CD4-positive, alpha-beta T cell (primary cell): ENCODE measurements at regions of chr2 and their contacts with region 1.

Region 1: GRCh38 chr2:190880378-190881073 is at the start of gene GLS:
- DNase-seq: peak; percentile 94 to 99 (median 95)
- ATAC-seq: peak; percentile 74
- H3K4me3 ChIP-seq: peak within 1 kb of the TSS; percentile 73
- H3K4me3 Mint-ChIP-seq: peak within 1 kb of the TSS; percentile 99
- H3K27ac ChIP-seq: peak within 1 kb of the TSS; percentile 86 to 96
- H3K27ac Mint-ChIP-seq: peak within 1 kb of the TSS; percentile 97
- H3K4me1 ChIP-seq: peaks cover 29% of the 10 kb centered on the region
- H3K4me1 Mint-ChIP-seq: peaks cover 63% of the 10 kb centered on the region
- H3K27me3 ChIP-seq: no peaks in the 10 kb centered on the region
- H3K27me3 Mint-ChIP-seq: no peaks in the 10 kb centered on the region
- CTCF ChIP-seq: no peak
- total RNA-seq, gene GLS: 215 to 224 TPM

Region 2: DNA sequence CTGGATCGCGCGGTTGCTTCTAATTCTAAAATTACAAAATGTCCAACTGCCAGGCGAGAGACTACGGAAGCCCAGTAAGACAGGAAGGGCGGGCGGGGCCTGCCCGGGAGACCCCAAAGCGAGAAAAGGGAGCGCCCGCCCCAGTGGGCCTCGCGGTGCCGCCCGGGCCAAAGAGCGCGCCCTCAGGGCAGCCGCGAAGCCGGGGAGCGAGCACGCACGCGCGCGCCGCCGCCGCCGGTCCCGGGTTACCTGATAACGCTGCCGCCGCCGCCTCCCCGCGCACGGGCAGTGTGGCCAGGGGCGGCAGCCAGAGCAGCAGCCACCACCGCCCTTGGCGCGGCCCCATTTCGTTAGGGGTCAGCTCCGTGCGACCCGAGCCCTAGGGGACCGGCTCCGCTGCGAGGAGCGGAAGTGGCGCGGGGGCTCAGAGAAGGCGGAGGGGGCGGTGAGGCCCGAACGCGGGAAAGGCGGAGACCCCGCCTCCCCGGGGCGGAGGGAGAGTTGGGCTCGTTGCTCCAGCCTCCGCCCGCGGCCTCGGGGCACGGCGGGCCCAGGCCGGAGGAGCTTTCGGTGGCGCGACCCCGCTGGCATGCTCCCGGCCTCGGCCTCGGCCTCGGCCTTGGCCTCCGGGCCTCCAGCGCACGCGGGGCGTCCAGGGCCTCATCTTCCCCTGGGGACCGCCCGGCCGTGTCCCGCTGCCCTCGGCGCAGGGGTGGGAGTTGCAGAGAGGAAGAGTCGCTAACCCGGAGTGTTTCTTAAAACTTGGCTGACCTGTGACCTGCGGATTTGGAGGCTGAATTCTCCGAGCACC is 346.0 kb before region 1 on chr2 and contains the start of gene NEMP2:
- CTCF ChIA-PET with region 1: no interaction called
- POLR2A ChIA-PET with region 1: interaction called, 20 read pairs
- intact Hi-C with region 1: loop called in 1 of 2 experiments (anchors 5 kb)
- DNase-seq: peak; percentile 53 to 91 (median 76)
- ATAC-seq: peak; percentile 59
- H3K4me3 ChIP-seq: peak within 1 kb of the TSS; percentile 77
- H3K4me3 Mint-ChIP-seq: peak within 1 kb of the TSS; percentile 94
- H3K27ac ChIP-seq: peak within 1 kb of the TSS; percentile 87 to 95
- H3K27ac Mint-ChIP-seq: peak within 1 kb of the TSS; percentile 99
- H3K4me1 ChIP-seq: peaks cover 40% of the 10 kb centered on the region
- H3K4me1 Mint-ChIP-seq: peaks cover 73% of the 10 kb centered on the region
- H3K27me3 ChIP-seq: no peaks in the 10 kb centered on the region
- H3K27me3 Mint-ChIP-seq: no peaks in the 10 kb centered on the region
- CTCF ChIP-seq: no peak
- total RNA-seq, gene NEMP2: 11.6 to 12.2 TPM

Region 3: DNA sequence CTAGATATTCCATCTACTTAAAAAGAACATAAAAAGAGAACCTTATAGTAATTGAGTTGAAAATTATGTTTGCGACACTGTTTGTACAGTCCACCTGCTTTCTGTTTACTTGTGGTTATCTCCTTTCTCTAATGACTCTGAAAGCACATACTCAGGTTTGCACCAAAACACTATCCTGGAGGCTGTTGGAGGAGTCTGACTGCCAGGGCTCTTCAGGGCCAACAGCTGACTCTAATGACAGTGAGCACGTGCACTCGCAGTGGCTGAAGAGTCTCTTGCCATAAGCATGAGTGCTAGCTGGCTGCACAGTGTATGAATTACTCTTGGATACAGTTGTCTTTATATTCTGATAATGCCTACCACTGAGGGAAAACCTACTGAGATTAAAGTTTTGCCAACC is 16.6 kb before region 1 on chr2:
- CTCF ChIA-PET with region 1: interaction called, 3 read pairs
- POLR2A ChIA-PET with region 1: interaction called, 19 read pairs
- intact Hi-C with region 1: no loop called
- DNase-seq: no peak
- ATAC-seq: no peak
- H3K4me3 ChIP-seq: no peak overlapping the region
- H3K4me3 Mint-ChIP-seq: no peak overlapping the region
- H3K27ac ChIP-seq: no peak overlapping the region
- H3K27ac Mint-ChIP-seq: no peak overlapping the region
- H3K4me1 ChIP-seq: peaks cover 7% of the 10 kb centered on the region
- H3K4me1 Mint-ChIP-seq: peaks cover 29% of the 10 kb centered on the region
- H3K27me3 ChIP-seq: no peaks in the 10 kb centered on the region
- H3K27me3 Mint-ChIP-seq: no peaks in the 10 kb centered on the region
- CTCF ChIP-seq: no peak

Region 4: GRCh38 chr2:190916829-190917228 is 36.3 kb after region 1 on chr2:
- CTCF ChIA-PET with region 1: no interaction called
- POLR2A ChIA-PET with region 1: interaction called, 3 read pairs
- intact Hi-C with region 1: loop called in 1 of 2 experiments (anchors 5 kb)
- DNase-seq: peak in 3 of 14 experiments; percentile 3 to 25 (median 14)
- ATAC-seq: peak; percentile 68
- H3K4me3 ChIP-seq: no peak overlapping the region
- H3K4me3 Mint-ChIP-seq: no peak overlapping the region
- H3K27ac ChIP-seq: no peak overlapping the region
- H3K27ac Mint-ChIP-seq: peak overlapping the region; percentile 3
- H3K4me1 ChIP-seq: no peaks in the 10 kb centered on the region
- H3K4me1 Mint-ChIP-seq: peaks cover 57% of the 10 kb centered on the region
- H3K27me3 ChIP-seq: no peaks in the 10 kb centered on the region
- H3K27me3 Mint-ChIP-seq: no peaks in the 10 kb centered on the region
- CTCF ChIP-seq: no peak

Region 5: DNA sequence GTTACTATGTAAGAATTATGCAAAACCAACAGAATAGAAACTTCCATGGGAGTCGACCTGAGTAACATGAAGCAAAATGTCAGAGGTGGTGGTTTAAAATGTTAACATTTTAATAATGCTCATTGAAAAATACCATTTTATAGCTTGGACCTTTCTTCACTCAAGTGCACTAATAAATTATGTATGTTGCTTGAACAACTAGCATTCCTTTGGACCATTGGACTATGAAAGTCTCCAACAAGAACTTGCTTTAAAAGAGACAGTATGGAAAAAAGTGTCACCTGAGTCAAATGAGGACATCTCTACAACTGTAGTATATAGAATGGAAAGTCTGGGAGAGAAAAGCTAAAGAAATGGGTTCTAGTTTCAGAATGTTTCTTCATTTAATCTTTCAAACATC is 52.0 kb after region 1 on chr2:
- CTCF ChIA-PET with region 1: no interaction called
- POLR2A ChIA-PET with region 1: no interaction called
- intact Hi-C with region 1: no loop called
- DNase-seq: no peak
- ATAC-seq: no peak
- H3K4me3 ChIP-seq: no peak overlapping the region
- H3K4me3 Mint-ChIP-seq: no peak overlapping the region
- H3K27ac ChIP-seq: no peak overlapping the region
- H3K27ac Mint-ChIP-seq: peak overlapping the region; percentile 37
- H3K4me1 ChIP-seq: no peaks in the 10 kb centered on the region
- H3K4me1 Mint-ChIP-seq: peaks cover 37% of the 10 kb centered on the region
- H3K27me3 ChIP-seq: no peaks in the 10 kb centered on the region
- H3K27me3 Mint-ChIP-seq: no peaks in the 10 kb centered on the region
- CTCF ChIP-seq: no peak

Region 6: GRCh38 chr2:191013932-191014652 is 133.6 kb after region 1 on chr2 and contains the start of gene STAT1:
- CTCF ChIA-PET with region 1: no interaction called
- POLR2A ChIA-PET with region 1: interaction called, 53 read pairs
- intact Hi-C with region 1: loop called (anchors 1 to 5 kb)
- DNase-seq: peak; percentile 89 to 99 (median 96)
- ATAC-seq: peak; percentile 84
- H3K4me3 ChIP-seq: peak within 1 kb of the TSS; percentile 75
- H3K4me3 Mint-ChIP-seq: no peak within 1 kb of the TSS
- H3K27ac ChIP-seq: peak within 1 kb of the TSS; percentile 89 to 91
- H3K27ac Mint-ChIP-seq: no peak within 1 kb of the TSS
- H3K4me1 ChIP-seq: peaks cover 54% of the 10 kb centered on the region
- H3K4me1 Mint-ChIP-seq: peaks cover 43% of the 10 kb centered on the region
- H3K27me3 ChIP-seq: no peaks in the 10 kb centered on the region
- H3K27me3 Mint-ChIP-seq: no peaks in the 10 kb centered on the region
- CTCF ChIP-seq: no peak
- total RNA-seq, gene STAT1: 56.6 to 57.8 TPM

Region 7: GRCh38 chr2:191677646-191678436 is 797.3 kb after region 1 on chr2 and contains the start of gene NABP1:
- CTCF ChIA-PET with region 1: no interaction called
- POLR2A ChIA-PET with region 1: interaction called, 14 read pairs
- intact Hi-C with region 1: loop called in 1 of 2 experiments (anchors 5 kb)
- DNase-seq: peak; percentile 98 to 100 (median 99)
- ATAC-seq: peak; percentile 86
- H3K4me3 ChIP-seq: peak within 1 kb of the TSS; percentile 78
- H3K4me3 Mint-ChIP-seq: peak within 1 kb of the TSS; percentile 97
- H3K27ac ChIP-seq: peak within 1 kb of the TSS; percentile 90 to 94
- H3K27ac Mint-ChIP-seq: peak within 1 kb of the TSS; percentile 100
- H3K4me1 ChIP-seq: peaks cover 44% of the 10 kb centered on the region
- H3K4me1 Mint-ChIP-seq: peaks cover 75% of the 10 kb centered on the region
- H3K27me3 ChIP-seq: no peaks in the 10 kb centered on the region
- H3K27me3 Mint-ChIP-seq: no peaks in the 10 kb centered on the region
- CTCF ChIP-seq: no peak
- total RNA-seq, gene NABP1: 32.0 to 32.9 TPM